OCI-LY7 (cell line): ENCODE measurements at regions of chr12 and their contacts with region 1.

Region 1: DNA sequence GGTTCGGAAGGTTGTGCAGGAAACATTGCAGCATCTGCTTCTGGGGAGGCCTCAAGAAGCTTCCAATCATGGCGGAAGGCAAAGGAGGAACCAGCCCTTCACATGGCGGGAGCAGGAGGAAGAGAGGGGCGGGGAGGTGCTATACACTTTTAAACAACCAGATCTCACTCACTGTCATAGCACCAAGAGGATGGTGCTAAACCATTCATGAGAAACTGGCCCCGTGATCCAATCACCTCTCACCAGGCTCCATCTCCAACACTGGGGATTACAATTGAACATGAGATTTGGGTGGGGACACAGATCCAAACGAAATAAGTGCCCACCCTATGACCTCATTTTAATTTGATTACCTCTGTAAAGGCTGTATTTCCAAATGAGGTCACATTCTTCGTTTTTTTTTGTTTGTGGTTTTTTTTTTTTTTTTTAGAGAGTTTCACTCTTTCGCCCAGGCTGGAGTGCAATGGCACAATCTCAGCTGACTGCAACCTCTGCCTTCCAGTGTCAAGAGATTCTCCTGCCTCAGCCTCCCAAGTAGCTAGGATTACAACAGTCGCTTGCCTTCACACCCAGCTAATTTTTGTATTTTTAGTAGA is 11.4 kb upstream of the ORAI1 start:
- DNase-seq: no peak
- H3K4me3 ChIP-seq: no peak overlapping the region
- H3K27ac ChIP-seq: no peak overlapping the region
- H3K4me1 ChIP-seq: peaks cover 8% of the 10 kb centered on the region
- CTCF ChIP-seq: no peak

Region 2: DNA sequence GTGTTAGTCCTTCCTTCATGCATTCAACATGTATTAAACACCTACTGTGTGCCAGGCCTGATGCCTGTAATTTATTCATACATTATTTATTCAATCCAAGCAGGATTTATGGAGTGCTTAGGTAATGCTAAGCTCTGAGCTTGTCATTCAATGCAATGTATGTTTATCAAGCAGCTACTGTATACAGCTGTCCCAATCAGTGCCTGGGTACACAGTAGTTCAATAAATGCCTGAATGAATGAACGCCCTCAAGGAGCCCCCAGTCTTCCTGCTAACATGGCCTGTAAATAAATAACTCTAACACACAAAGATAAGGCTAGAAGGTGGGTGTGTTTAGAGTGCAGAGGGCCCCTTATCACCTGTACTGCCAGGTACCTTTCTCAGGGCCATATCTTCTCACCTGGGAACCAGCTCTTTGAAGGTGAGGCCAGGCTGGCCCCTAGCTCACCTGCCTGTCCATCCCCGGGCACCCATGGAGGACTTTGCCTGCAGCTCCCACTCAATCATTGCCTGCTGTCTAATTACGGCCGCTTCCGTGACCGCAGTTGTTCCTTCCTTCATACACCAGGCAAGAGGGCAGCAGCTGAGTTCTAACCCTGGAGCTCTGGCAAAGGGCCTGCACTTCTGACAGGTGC is 14.2 kb before region 1 on chr12:
- CTCF ChIA-PET with region 1: interaction called, 10 read pairs
- POLR2A ChIA-PET with region 1: no interaction called
- intact Hi-C with region 1: no loop called
- DNase-seq: no peak
- H3K4me3 ChIP-seq: no peak overlapping the region
- H3K27ac ChIP-seq: no peak overlapping the region
- H3K4me1 ChIP-seq: no peaks in the 10 kb centered on the region
- CTCF ChIP-seq: no peak

Region 3: GRCh38 chr12:122423258-122424083 is 808.5 kb after region 1 on chr12:
- CTCF ChIA-PET with region 1: no interaction called
- POLR2A ChIA-PET with region 1: interaction called, 10 read pairs
- intact Hi-C with region 1: no loop called
- DNase-seq: peak; percentile 52
- H3K4me3 ChIP-seq: peak overlapping the region; percentile 62
- H3K27ac ChIP-seq: peak overlapping the region; percentile 30
- H3K4me1 ChIP-seq: peaks cover 27% of the 10 kb centered on the region
- CTCF ChIP-seq: no peak